Posterior vena cava (tissue), 2 donors: ENCODE measurements at regions of chr3 and their contacts with region 1.

Region 1: GRCh38 chr3:66413151-66413751 is 87.6 kb downstream of the LRIG1 start:
- DNase-seq: no peak

Region 2: DNA sequence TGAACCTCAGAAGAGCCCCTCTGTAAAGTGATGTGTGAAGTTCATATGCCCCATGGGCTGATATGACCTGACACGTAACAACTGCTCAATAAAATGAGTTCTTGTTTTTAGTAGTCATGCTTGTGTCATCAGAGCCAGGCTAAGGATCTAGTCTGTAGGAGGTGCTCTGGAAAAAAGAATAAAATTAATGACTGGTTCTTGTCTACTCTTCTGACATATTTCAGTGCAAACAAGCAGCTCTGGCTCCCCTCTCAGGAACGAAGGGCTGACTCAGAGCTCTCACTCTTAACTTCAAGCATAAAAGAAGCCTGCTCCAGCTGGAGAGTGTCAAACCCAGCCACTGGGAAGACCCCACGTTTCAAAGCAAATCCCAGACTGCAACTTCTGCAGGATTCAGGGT is 10.5 kb after region 1 on chr3:
- intact Hi-C with region 1: loop called in 1 of 2 experiments (anchors 1 kb)
- DNase-seq: no peak